Dendritic cell treated with granulocyte-macrophage colony-stimulating factor and Interleukin-4, amounts not matched to agents 40 ng/mL and 50 ng/mL, for 4 days (primary cell): ENCODE measurements at regions of chr5 and their contacts with region 1.

Region 1: GRCh38 chr5:151058891-151059489 is 21.8 kb downstream of the TNIP1 start:
- H3K4me3 Mint-ChIP-seq: peak overlapping the region; percentile 35
- H3K27ac Mint-ChIP-seq: peak overlapping the region; percentile 76
- H3K4me1 Mint-ChIP-seq: peaks cover 90% of the 10 kb centered on the region
- H3K27me3 Mint-ChIP-seq: no peaks in the 10 kb centered on the region

Region 2: DNA sequence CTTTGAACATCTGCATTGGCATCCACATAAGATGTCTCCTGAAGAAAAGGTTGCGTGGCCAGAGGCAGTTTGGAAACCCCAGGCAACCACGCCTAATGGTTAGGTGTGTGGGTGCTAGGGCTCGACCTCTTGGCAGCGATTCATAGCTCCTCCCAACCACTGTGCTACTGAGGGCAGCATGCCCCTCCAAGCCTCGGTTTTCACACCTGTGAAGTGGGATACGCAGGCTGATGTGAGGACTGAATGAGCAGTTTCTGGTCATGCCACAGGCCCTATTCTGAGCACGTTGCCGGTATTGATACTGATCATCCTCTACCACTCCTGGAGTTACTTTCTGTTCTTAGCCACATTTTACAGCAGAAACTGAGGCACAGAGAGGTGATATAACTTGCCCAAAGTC is 532.0 kb before region 1 on chr5:
- intact Hi-C with region 1: no loop called
- H3K4me3 Mint-ChIP-seq: no peak overlapping the region
- H3K27ac Mint-ChIP-seq: no peak overlapping the region
- H3K4me1 Mint-ChIP-seq: peaks cover 11% of the 10 kb centered on the region
- H3K27me3 Mint-ChIP-seq: no peaks in the 10 kb centered on the region

Region 3: GRCh38 chr5:151093476-151093889 is 34.5 kb after region 1 on chr5:
- intact Hi-C with region 1: loop called (anchors 5 kb)
- H3K4me3 Mint-ChIP-seq: no peak overlapping the region
- H3K27ac Mint-ChIP-seq: peak overlapping the region; percentile 75
- H3K4me1 Mint-ChIP-seq: peaks cover 94% of the 10 kb centered on the region
- H3K27me3 Mint-ChIP-seq: no peaks in the 10 kb centered on the region